ENCODE measurements at regions of chr21 and their contacts with region 1.

Region 1: GRCh38 chr21:45087022-45087823 is 12.8 kb downstream of the ADARB1 start:
- DNase-seq: peak in 3 of 14 experiments; percentile 57 to 68 (median 58)
- ATAC-seq: peak; percentile 51
- H3K4me3 ChIP-seq: no peak overlapping the region
- H3K4me3 Mint-ChIP-seq: peak overlapping the region; percentile 61
- H3K27ac ChIP-seq: peak overlapping the region in 1 of 2 donors; percentile 5
- H3K27ac Mint-ChIP-seq: peak overlapping the region; percentile 94
- H3K4me1 ChIP-seq: peaks cover 70% of the 10 kb centered on the region
- H3K4me1 Mint-ChIP-seq: peaks cover 91% of the 10 kb centered on the region
- H3K27me3 ChIP-seq: no peaks in the 10 kb centered on the region
- H3K27me3 Mint-ChIP-seq: no peaks in the 10 kb centered on the region
- CTCF ChIP-seq: no peak

Region 2: DNA sequence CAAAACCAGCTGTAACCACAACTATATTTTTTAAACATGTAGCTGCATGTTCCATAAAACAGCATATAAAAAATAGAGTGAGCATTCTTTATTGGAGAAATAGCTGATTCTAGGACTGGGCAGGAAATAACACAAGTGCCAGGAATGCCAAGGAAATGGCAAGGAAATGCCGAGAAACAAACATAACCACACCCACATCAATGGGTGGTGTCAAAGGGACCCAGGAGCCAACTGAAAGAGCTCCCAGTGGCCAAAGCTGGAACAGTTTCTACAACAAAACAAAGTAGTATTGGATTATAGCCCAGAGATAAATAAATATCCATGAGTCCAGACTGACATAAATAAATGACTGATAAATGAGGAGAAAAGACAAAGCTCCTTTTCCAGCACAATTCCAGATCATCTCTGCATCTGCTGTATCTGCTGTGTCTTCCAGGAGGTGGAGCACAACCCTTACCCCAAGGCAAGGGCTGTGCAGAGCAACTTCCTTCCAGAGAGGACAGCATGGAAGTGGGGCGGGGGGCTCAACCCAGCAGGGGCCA is 15.2 kb after region 1 on chr21:
- CTCF ChIA-PET with region 1: interaction called, 3 read pairs
- POLR2A ChIA-PET with region 1: interaction called, 6 read pairs
- intact Hi-C with region 1: loop called (anchors 2 kb)
- DNase-seq: no peak
- ATAC-seq: peak; percentile 63
- H3K4me3 ChIP-seq: no peak overlapping the region
- H3K4me3 Mint-ChIP-seq: no peak overlapping the region
- H3K27ac ChIP-seq: no peak overlapping the region
- H3K27ac Mint-ChIP-seq: no peak overlapping the region
- H3K4me1 ChIP-seq: peaks cover 32% of the 10 kb centered on the region
- H3K4me1 Mint-ChIP-seq: peaks cover 74% of the 10 kb centered on the region
- H3K27me3 ChIP-seq: no peaks in the 10 kb centered on the region
- H3K27me3 Mint-ChIP-seq: no peaks in the 10 kb centered on the region
- CTCF ChIP-seq: no peak

Measured in CD4-positive, alpha-beta T cell (primary cell).